CD14-positive monocyte (primary cell): ENCODE measurements at regions of chr11 and their contacts with region 1.

Region 1: DNA sequence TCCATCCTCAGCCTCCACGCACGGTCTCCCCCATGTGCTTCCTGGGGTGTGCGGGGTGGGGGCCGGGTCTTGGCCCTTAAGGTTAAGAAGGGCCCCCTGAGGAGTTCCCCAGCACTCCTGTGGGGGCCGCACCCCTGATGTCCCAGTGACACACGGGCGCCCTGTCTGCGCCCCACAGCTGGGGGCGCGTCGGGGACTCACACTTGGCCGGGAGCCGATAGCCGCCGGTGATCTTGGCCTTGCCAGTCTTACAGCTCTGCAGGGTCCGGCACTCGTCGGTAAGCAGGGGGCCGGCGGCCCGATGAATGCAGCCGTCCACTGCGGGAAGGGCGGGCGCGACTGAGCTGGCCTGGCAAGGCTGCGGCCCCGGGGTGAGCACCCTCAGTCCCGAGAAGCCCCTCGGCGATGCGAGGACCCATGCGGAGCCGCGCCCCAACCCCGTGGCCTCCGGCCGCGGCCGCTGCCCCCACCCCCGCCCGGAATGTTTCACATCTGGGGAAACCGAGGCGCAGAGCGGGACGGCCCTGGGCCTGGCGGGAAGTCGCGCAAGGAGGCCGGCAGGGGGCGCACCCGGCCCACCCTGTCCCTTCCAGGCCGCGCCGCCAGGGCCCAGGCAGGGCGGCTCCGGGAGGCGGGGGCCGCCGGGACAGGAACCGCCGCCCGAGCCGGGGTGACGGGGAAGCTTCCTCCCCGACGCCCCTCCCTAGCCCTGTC is 13.9 kb downstream of the OTUB1 start:
- DNase-seq: peak; percentile 65 to 85 (median 82)
- H3K4me3 ChIP-seq: peak overlapping the region in 1 of 3 experiments; percentile 68
- H3K4me3 Mint-ChIP-seq: peak overlapping the region in 1 of 2 donors; percentile 86
- H3K27ac ChIP-seq: no peak overlapping the region
- H3K27ac Mint-ChIP-seq: no peak overlapping the region
- H3K4me1 ChIP-seq: peaks cover 37 to 49% of the 10 kb centered on the region in 2 donors
- H3K4me1 Mint-ChIP-seq: peaks cover 38% of the 10 kb centered on the region
- H3K27me3 ChIP-seq: peaks cover 15 to 52% of the 10 kb centered on the region in 2 donors
- H3K27me3 Mint-ChIP-seq: peaks cover 45 to 63% (median 50%) of the 10 kb centered on the region in 3 donors
- CTCF ChIP-seq: peak; percentile 91

Region 2: GRCh38 chr11:63986156-63986931 is 13.8 kb before region 1 on chr11 and contains the start of gene OTUB1:
- intact Hi-C with region 1: no loop called
- DNase-seq: peak; percentile 84 to 92 (median 90)
- H3K4me3 ChIP-seq: peak within 1 kb of the TSS; percentile 83 to 99 (median 97)
- H3K4me3 Mint-ChIP-seq: peak within 1 kb of the TSS; percentile 97 to 99
- H3K27ac ChIP-seq: peak within 1 kb of the TSS; percentile 81 to 93
- H3K27ac Mint-ChIP-seq: peak within 1 kb of the TSS; percentile 92 to 98 (median 96)
- H3K4me1 ChIP-seq: peaks cover 37 to 48% of the 10 kb centered on the region in 2 donors
- H3K4me1 Mint-ChIP-seq: peaks cover 39% of the 10 kb centered on the region
- H3K27me3 ChIP-seq: no peaks in the 10 kb centered on the region
- H3K27me3 Mint-ChIP-seq: peaks cover 0 to 4% (median 1%) of the 10 kb centered on the region in 3 donors
- CTCF ChIP-seq: no peak
- polyA plus RNA-seq, gene OTUB1: 131 to 170 (median 140) TPM

Region 3: DNA sequence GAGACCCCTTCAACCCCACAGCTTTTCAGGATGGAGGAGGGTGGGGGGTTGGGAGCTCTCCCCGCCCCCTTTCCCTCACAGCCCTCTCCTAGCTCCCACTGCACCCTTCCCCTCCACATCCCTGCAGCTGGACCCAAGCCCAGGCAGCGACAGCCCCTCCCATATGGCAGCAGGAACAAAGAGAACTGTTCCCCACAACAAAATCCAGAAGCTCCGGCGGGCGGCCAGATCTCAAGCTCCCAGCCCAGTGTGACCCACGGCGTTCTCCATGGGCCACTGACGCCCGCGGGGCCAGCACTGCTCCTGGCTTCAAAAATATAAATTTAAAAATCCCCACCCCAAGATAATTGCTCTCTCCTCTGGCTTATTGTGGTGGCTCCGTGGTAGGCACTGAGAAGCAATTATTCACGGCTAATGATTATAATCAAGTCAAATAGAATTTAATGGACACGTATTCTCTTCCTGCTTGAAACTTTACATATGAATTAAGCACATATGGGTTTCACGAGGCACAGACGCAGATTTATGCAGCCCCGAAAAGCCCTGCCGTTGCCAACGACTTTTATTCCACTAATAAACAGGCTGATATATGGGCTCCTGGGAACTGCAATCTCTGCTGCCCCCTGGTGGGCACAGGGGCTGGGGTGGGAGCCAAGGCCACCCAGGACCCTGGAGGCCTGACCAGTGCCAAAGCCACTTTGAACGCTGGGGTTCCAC is 148.2 kb after region 1 on chr11:
- intact Hi-C with region 1: loop called (anchors 2 kb)
- DNase-seq: peak; percentile 63 to 67 (median 64)
- H3K4me3 ChIP-seq: no peak overlapping the region
- H3K4me3 Mint-ChIP-seq: no peak overlapping the region
- H3K27ac ChIP-seq: no peak overlapping the region
- H3K27ac Mint-ChIP-seq: peak overlapping the region in 1 of 7 donors; percentile 66
- H3K4me1 ChIP-seq: peaks cover 0 to 9% of the 10 kb centered on the region in 2 donors
- H3K4me1 Mint-ChIP-seq: peaks cover 13% of the 10 kb centered on the region
- H3K27me3 ChIP-seq: no peaks in the 10 kb centered on the region
- H3K27me3 Mint-ChIP-seq: peaks cover 3 to 5% (median 4%) of the 10 kb centered on the region in 3 donors
- CTCF ChIP-seq: peak; percentile 95

Region 4: GRCh38 chr11:64269380-64270234 is 269.4 kb after region 1 on chr11:
- intact Hi-C with region 1: no loop called
- DNase-seq: peak; percentile 98 to 100 (median 99)
- H3K4me3 ChIP-seq: peak overlapping the region; percentile 61 to 95 (median 67)
- H3K4me3 Mint-ChIP-seq: peak overlapping the region; percentile 94 to 98
- H3K27ac ChIP-seq: peak overlapping the region; percentile 84 to 97
- H3K27ac Mint-ChIP-seq: peak overlapping the region; percentile 96 to 99 (median 98)
- H3K4me1 ChIP-seq: peaks cover 29 to 34% of the 10 kb centered on the region in 2 donors
- H3K4me1 Mint-ChIP-seq: peaks cover 29% of the 10 kb centered on the region
- H3K27me3 ChIP-seq: no peaks in the 10 kb centered on the region
- H3K27me3 Mint-ChIP-seq: no peaks in the 10 kb centered on the region
- CTCF ChIP-seq: peak; percentile 17

Region 5: GRCh38 chr11:64444838-64445441 is 444.8 kb after region 1 on chr11:
- intact Hi-C with region 1: no loop called
- DNase-seq: peak in 1 of 3 donors; percentile 26
- H3K4me3 ChIP-seq: no peak overlapping the region
- H3K4me3 Mint-ChIP-seq: no peak overlapping the region
- H3K27ac ChIP-seq: no peak overlapping the region
- H3K27ac Mint-ChIP-seq: peak overlapping the region in 1 of 7 donors; percentile 55
- H3K4me1 ChIP-seq: peaks cover 61 to 72% of the 10 kb centered on the region in 2 donors
- H3K4me1 Mint-ChIP-seq: peaks cover 72% of the 10 kb centered on the region
- H3K27me3 ChIP-seq: no peaks in the 10 kb centered on the region
- H3K27me3 Mint-ChIP-seq: peaks cover 0 to 3% (median 0%) of the 10 kb centered on the region in 3 donors
- CTCF ChIP-seq: no peak